ENCODE measurements at regions of chr5 and their contacts with region 1.

Region 1: GRCh38 chr5:57298295-57298984 is 124.6 kb downstream of the GPBP1 start:
- DNase-seq: peak; percentile 55 to 85
- ATAC-seq: peak; percentile 92
- H3K4me3 ChIP-seq: no peak overlapping the region
- H3K27ac ChIP-seq: peak overlapping the region; percentile 35 to 68; a peak in 4 of 6 replicates
- H3K4me1 ChIP-seq: peaks cover 18% of the 10 kb centered on the region
- CTCF ChIP-seq: peak; percentile 86
- EP300 ChIP-seq: no peak
- POLR2A ChIP-seq: no peak
- RAD21 ChIP-seq: peak; percentile 92 to 93

Region 2: DNA sequence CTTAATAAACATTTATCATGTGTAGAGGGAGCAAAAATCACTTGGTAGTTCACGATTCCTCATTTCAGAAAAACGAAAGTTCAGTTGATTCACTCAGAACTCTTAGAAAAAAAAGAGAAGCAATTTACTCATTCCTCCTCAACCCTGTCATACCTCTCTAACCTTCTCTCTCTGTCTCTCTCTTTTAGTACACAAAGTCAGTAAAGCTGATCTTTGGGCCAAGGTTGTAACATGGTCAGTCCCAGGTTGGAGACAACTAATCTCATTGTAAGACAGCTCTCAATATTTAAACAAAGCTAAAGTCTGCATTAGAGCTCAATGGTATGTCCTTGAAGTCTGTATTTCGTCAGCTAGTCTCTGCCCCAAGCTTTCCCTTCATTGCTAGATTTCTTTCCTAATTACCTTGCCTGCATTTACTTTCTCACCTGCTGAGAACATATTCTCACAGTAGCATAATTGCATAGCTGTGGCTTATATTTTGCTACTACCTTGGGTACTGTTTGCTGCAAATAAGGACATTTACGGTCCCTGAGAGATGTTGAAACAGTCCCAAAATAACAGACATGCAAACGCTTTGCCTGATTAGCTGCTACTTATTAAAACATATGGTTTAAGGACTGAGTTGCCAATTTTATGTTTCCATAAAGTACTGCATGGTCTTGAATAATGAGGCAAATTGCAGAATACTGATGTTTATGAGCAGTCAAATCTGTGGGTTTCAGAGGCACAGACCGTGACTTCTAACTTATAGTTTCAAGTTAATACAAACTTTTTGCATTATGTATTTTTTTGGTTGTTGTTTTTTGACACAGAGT is 13.7 kb after region 1 on chr5:
- CTCF ChIA-PET with region 1: interaction called, 13 read pairs
- POLR2A ChIA-PET with region 1: no interaction called
- DNase-seq: no peak
- ATAC-seq: no peak
- H3K4me3 ChIP-seq: no peak overlapping the region
- H3K27ac ChIP-seq: no peak overlapping the region
- H3K4me1 ChIP-seq: no peaks in the 10 kb centered on the region
- CTCF ChIP-seq: no peak
- EP300 ChIP-seq: no peak
- POLR2A ChIP-seq: no peak
- RAD21 ChIP-seq: no peak

Region 3: GRCh38 chr5:57435701-57436134 is 137.3 kb after region 1 on chr5:
- CTCF ChIA-PET with region 1: interaction called, 14 read pairs
- POLR2A ChIA-PET with region 1: no interaction called
- DNase-seq: peak; percentile 30 to 71
- ATAC-seq: peak; percentile 62 to 87; a peak in 4 of 6 replicates
- H3K4me3 ChIP-seq: no peak overlapping the region
- H3K27ac ChIP-seq: peak overlapping the region; percentile 68 to 72
- H3K4me1 ChIP-seq: peaks cover 21% of the 10 kb centered on the region; the same call in 2 of the 3 replicates
- CTCF ChIP-seq: no peak
- EP300 ChIP-seq: peak; percentile 67 to 76; a peak in 3 of 5 replicates
- POLR2A ChIP-seq: no peak
- RAD21 ChIP-seq: peak in 1 of 2 experiments; percentile 29; a peak in 1 of 5 replicates

Region 4: DNA sequence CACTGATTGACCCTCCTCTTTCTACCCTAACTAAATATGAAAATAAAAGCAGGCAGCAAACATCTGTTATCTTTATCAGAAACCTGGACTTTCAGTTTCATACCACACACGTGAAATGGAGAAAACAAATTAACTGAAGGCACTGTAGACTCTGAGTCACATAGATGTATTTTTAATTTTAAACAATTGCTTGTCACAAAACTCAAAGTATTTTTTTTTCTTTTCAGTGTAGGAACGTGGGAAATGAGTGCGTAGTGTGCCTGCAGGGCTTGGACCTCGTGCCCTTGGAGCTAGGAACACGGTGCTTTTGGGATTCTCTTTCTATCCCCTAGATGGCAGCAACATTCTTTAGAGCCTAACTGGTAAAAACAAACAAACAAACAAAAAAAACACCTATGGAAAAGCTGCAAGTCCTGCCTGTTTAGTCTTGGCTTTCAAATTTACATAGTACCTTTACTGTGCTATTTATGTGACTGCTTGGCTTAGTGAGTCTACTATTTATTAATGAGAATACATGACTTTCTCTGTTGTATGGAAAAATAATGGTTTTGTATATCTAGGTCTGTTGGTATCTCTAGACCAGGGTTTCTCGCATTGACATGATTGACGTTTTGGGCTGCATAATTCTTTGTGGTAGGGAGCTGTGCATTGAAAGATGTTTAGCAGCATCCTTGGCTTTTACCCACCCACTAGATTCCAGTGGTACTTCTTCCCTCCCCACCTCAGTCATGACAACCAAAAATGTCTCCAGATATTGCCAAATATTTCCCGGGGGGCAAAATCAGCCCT is 201.0 kb after region 1 on chr5:
- CTCF ChIA-PET with region 1: interaction called, 52 read pairs
- POLR2A ChIA-PET with region 1: no interaction called
- DNase-seq: peak; percentile 47 to 74
- ATAC-seq: peak; percentile 85; a peak in 5 of 6 replicates
- H3K4me3 ChIP-seq: peak overlapping the region; percentile 23; the same call in 1 of the 3 replicates
- H3K27ac ChIP-seq: peak overlapping the region; percentile 57 to 66
- H3K4me1 ChIP-seq: peaks cover 21% of the 10 kb centered on the region
- CTCF ChIP-seq: peak; percentile 92
- EP300 ChIP-seq: no peak
- POLR2A ChIP-seq: no peak
- RAD21 ChIP-seq: peak; percentile 96

Region 5: DNA sequence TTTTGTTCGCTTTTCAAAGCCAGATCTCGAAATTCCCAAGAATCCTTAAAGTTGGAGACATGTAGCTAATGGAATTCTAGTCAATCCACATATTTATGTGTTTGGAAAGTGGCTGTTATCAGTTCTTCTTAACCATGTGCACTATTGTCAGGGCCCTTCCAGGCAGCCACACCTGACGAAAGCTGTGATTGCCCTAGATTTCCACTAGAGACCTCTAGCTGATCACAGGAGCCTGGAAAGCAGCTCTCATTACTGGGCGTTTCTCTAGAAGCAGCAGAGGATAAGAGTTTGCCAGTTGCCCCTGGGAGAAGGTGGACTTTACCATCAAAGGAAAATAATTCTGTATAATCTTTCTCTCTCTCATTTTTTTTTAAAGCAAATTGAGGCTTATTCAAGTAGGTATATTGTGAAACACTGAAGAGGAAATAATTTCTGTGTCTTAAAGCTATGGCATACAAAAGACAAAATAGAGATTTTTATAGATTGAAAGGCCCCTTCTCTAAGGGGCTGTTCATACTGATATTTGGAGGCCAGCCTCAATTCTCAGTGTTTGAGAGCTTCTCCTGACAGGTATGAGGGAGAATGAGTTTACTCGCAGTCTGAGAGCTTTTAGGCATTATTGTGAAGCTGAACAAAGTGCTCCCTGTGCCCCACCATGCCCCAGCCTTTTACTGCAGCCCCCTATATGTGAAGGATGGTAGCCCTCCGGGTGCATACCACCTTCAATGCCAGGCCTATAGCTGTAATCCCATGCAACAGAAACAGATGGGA is 589.6 kb after region 1 on chr5:
- CTCF ChIA-PET with region 1: interaction called, 16 read pairs
- POLR2A ChIA-PET with region 1: interaction called, 7 read pairs
- DNase-seq: peak; percentile 70 to 85
- ATAC-seq: peak; percentile 95 to 97
- H3K4me3 ChIP-seq: no peak overlapping the region
- H3K27ac ChIP-seq: peak overlapping the region; percentile 71 to 86
- H3K4me1 ChIP-seq: peaks cover 36% of the 10 kb centered on the region
- CTCF ChIP-seq: peak; percentile 80
- EP300 ChIP-seq: no peak
- POLR2A ChIP-seq: no peak
- RAD21 ChIP-seq: peak; percentile 94 to 97

Region 6: GRCh38 chr5:58849921-58850667 is 1551.7 kb after region 1 on chr5:
- CTCF ChIA-PET with region 1: interaction called, 10 read pairs
- POLR2A ChIA-PET with region 1: no interaction called
- DNase-seq: peak; percentile 54 to 64
- ATAC-seq: peak; percentile 92 to 94
- H3K4me3 ChIP-seq: no peak overlapping the region
- H3K27ac ChIP-seq: no peak overlapping the region
- H3K4me1 ChIP-seq: peaks cover 8% of the 10 kb centered on the region; the same call in 2 of the 3 replicates
- CTCF ChIP-seq: peak; percentile 60
- EP300 ChIP-seq: no peak
- POLR2A ChIP-seq: no peak
- RAD21 ChIP-seq: peak; percentile 79 to 83

Measured in A549 (cell line).